ENCODE measurements at regions of chr15 and their contacts with region 1.

Region 1: GRCh38 chr15:95291898-95292472 is 1038.5 kb upstream of the NR2F2 start:
- DNase-seq: peak; percentile 61
- H3K4me3 ChIP-seq: no peak overlapping the region
- H3K27ac ChIP-seq: no peak overlapping the region
- H3K4me1 ChIP-seq: peaks cover 55% of the 10 kb centered on the region
- H3K27me3 ChIP-seq: no peaks in the 10 kb centered on the region
- CTCF ChIP-seq: peak; percentile 41 to 58
- POLR2A ChIP-seq: no peak

Region 2: GRCh38 chr15:94607176-94607654 is 684.8 kb before region 1 on chr15:
- CTCF ChIA-PET with region 1: no interaction called
- POLR2A ChIA-PET with region 1: no interaction called
- dilution Hi-C with region 1: no loop called
- intact Hi-C with region 1: loop called (anchors 1 kb)
- DNase-seq: peak; percentile 96
- H3K4me3 ChIP-seq: no peak overlapping the region
- H3K27ac ChIP-seq: peak overlapping the region; percentile 97
- H3K4me1 ChIP-seq: peaks cover 40% of the 10 kb centered on the region
- H3K27me3 ChIP-seq: no peaks in the 10 kb centered on the region
- CTCF ChIP-seq: no peak
- POLR2A ChIP-seq: peak; percentile 75